ENCODE measurements at regions of chr2 and their contacts with region 1.

Region 1: GRCh38 chr2:100381240-100381639 is 36.2 kb downstream of the CHST10 start:
- DNase-seq: peak; percentile 89
- H3K4me3 Mint-ChIP-seq: no peak overlapping the region
- H3K27ac Mint-ChIP-seq: no peak overlapping the region
- H3K4me1 Mint-ChIP-seq: no peaks in the 10 kb centered on the region
- H3K27me3 Mint-ChIP-seq: no peaks in the 10 kb centered on the region

Region 2: GRCh38 chr2:100178051-100178788 is 203.0 kb before region 1 on chr2:
- CTCF ChIA-PET with region 1: no interaction called
- intact Hi-C with region 1: no loop called
- DNase-seq: peak; percentile 29
- H3K4me3 Mint-ChIP-seq: no peak overlapping the region
- H3K27ac Mint-ChIP-seq: no peak overlapping the region
- H3K4me1 Mint-ChIP-seq: no peaks in the 10 kb centered on the region
- H3K27me3 Mint-ChIP-seq: no peaks in the 10 kb centered on the region

Region 3: GRCh38 chr2:100391735-100392515 is 10.7 kb after region 1 on chr2:
- CTCF ChIA-PET with region 1: interaction called, 16 read pairs
- intact Hi-C with region 1: no loop called
- DNase-seq: no peak
- H3K4me3 Mint-ChIP-seq: no peak overlapping the region
- H3K27ac Mint-ChIP-seq: no peak overlapping the region
- H3K4me1 Mint-ChIP-seq: no peaks in the 10 kb centered on the region
- H3K27me3 Mint-ChIP-seq: no peaks in the 10 kb centered on the region

Region 4: GRCh38 chr2:100482741-100483140 is 101.5 kb after region 1 on chr2:
- CTCF ChIA-PET with region 1: no interaction called
- intact Hi-C with region 1: no loop called
- DNase-seq: no peak
- H3K4me3 Mint-ChIP-seq: no peak overlapping the region
- H3K27ac Mint-ChIP-seq: no peak overlapping the region
- H3K4me1 Mint-ChIP-seq: no peaks in the 10 kb centered on the region
- H3K27me3 Mint-ChIP-seq: no peaks in the 10 kb centered on the region

Measured in activated naive CD4-positive, alpha-beta T cell treated with anti-CD3 and anti-CD28 coated beads for 36 hours (primary cell).